ENCODE measurements at regions of chr1 and their contacts with region 1.

Region 1: GRCh38 chr1:31182352-31182751 is 57.3 kb downstream of the NKAIN1 start:
- DNase-seq: peak; percentile 74
- H3K4me3 Mint-ChIP-seq: peak overlapping the region; percentile 45
- H3K27ac Mint-ChIP-seq: no peak overlapping the region
- H3K4me1 Mint-ChIP-seq: peaks cover 11% of the 10 kb centered on the region
- H3K27me3 Mint-ChIP-seq: peaks cover 57% of the 10 kb centered on the region

Region 2: DNA sequence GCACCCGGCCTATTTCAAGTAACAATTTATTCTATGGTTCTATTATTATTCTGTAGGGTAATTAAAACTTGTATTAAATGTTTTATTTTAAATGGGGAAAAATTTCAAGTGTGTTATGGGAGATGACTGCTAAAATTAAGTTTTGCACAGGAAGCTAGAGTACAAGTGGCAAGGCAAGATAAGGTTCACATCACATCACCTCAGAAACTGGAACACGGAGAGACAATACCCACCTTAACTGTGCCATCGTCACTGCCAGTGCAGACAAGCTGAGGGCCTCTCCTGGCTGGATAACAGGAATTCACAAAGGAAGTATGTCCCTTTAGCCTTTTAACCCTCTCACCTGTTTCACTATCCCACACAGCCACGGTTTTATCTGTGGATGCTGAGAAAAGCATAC is 106.7 kb after region 1 on chr1:
- CTCF ChIA-PET with region 1: no interaction called
- DNase-seq: no peak
- H3K4me3 Mint-ChIP-seq: no peak overlapping the region
- H3K27ac Mint-ChIP-seq: no peak overlapping the region
- H3K4me1 Mint-ChIP-seq: no peaks in the 10 kb centered on the region
- H3K27me3 Mint-ChIP-seq: no peaks in the 10 kb centered on the region

Region 3: GRCh38 chr1:31548907-31549808 is 366.8 kb after region 1 on chr1:
- CTCF ChIA-PET with region 1: interaction called, 16 read pairs
- DNase-seq: peak; percentile 94
- H3K4me3 Mint-ChIP-seq: peak overlapping the region; percentile 35
- H3K27ac Mint-ChIP-seq: no peak overlapping the region
- H3K4me1 Mint-ChIP-seq: peaks cover 11% of the 10 kb centered on the region
- H3K27me3 Mint-ChIP-seq: peaks cover 17% of the 10 kb centered on the region

Measured in activated naive CD4-positive, alpha-beta T cell treated with anti-CD3 and anti-CD28 coated beads, Interleukin-2, amount 10 ng/mL, durations not matched to agents 7 days and 5 days (primary cell).